ENCODE measurements at regions of chr10 and their contacts with region 1.

Region 1: DNA sequence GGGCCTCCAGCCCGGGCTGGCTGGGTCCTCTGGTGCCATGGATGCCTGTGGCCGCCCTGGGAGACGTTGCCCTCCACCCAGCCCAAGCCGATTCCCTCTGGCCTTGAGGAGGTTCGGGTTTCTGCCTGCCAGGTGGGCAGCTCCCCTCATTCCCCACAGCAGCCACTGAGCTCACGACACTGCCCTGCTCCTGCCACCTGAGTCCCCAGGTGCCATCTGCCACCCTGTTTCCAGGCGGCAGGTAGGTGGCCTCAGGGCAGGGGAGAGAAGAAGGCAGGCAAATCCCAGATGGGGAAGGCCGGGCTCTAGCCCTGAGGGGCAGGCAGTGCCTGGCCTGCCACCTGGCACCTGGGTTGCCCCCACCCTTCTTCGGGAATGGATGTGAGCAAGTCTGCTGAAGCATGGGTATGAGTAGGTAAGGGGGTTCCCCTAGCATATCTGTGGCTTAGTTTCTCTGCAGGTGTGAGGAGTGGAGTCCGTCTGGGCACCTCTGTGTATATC is 92.2 kb upstream of the PPIF start:
- DNase-seq: no peak
- ATAC-seq: peak; percentile 51
- H3K4me3 Mint-ChIP-seq: peak overlapping the region; percentile 45
- H3K27ac Mint-ChIP-seq: peak overlapping the region; percentile 74
- H3K4me1 Mint-ChIP-seq: peaks cover 85% of the 10 kb centered on the region
- H3K27me3 Mint-ChIP-seq: no peaks in the 10 kb centered on the region
- CTCF ChIP-seq: no peak

Region 2: GRCh38 chr10:79266543-79267312 is 11.7 kb after region 1 on chr10:
- CTCF ChIA-PET with region 1: interaction called, 4 read pairs
- POLR2A ChIA-PET with region 1: interaction called, 311 read pairs
- intact Hi-C with region 1: loop called (anchors 1 kb)
- DNase-seq: peak; percentile 40
- ATAC-seq: peak; percentile 68
- H3K4me3 Mint-ChIP-seq: peak overlapping the region; percentile 69
- H3K27ac Mint-ChIP-seq: peak overlapping the region; percentile 92
- H3K4me1 Mint-ChIP-seq: peaks cover 96% of the 10 kb centered on the region
- H3K27me3 Mint-ChIP-seq: no peaks in the 10 kb centered on the region
- CTCF ChIP-seq: no peak

Measured in activated B cell treated with CpG ODN at 0.5 μM for 24 hours (primary cell).